ENCODE measurements at regions of chr19 and their contacts with region 1.

Region 1: GRCh38 chr19:42596391-42597072 is 1.8 kb upstream of the CEACAM8 start:
- DNase-seq: no peak
- ATAC-seq: peak; percentile 91
- H3K4me3 ChIP-seq: no peak overlapping the region
- H3K27ac ChIP-seq: no peak overlapping the region
- H3K4me1 ChIP-seq: no peaks in the 10 kb centered on the region
- H3K27me3 ChIP-seq: peaks cover 8% of the 10 kb centered on the region; the same call in 1 of the 2 replicates
- CTCF ChIP-seq: peak; percentile 59 to 96 (median 92)
- POLR2A ChIP-seq: no peak
- RAD21 ChIP-seq: peak; percentile 62

Region 2: DNA sequence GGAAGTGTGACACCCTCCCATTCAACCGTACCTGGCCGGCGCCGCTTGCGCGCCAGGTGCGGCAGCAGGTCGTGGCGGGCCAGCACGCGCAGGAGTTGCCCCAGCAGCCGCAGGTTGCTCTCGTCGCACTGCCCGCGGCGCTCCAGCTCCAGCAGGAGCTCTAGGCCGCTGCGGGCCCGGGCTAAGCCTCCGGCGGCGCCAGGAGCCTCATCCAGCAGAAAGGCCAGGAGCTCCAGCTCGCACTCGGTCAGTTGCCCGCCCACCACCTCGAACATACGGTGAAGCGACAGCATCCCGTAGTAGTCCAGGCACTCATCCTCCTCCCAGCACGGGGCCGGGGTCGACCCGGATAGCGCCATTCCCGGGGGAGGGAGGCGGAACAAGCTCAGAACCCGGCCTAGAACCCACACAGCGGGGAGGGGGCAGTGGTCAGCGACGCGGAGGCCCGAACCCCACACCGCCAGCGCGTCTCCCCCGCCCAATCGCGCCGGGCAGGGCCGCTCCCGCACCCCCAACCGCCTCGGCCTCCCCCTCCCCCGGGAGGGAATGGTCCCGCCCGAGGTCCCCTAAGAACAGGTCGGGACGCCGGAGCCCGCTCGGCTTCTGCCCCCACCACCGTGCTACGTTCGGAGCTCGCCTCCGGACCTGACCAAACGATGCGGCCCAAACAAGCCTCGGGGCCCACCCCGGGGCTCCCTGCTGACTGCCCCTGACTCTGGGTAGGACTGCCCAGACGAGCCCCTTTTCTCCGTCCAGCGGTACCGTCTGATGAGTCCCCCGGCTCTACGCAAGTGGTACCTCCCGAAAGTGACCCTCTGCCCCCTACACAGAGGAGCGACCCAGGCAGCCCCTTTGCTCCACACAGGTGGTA is 379.6 kb before region 1 on chr19:
- CTCF ChIA-PET with region 1: no interaction called
- POLR2A ChIA-PET with region 1: no interaction called
- RAD21 ChIA-PET with region 1: no interaction called
- intact Hi-C with region 1: no loop called
- DNase-seq: no peak
- ATAC-seq: peak; percentile 51
- H3K4me3 ChIP-seq: peak overlapping the region; percentile 89 to 99
- H3K27ac ChIP-seq: peak overlapping the region; percentile 91
- H3K4me1 ChIP-seq: peaks cover 17 to 38% of the 10 kb centered on the region in 2 experiments
- H3K27me3 ChIP-seq: no peaks in the 10 kb centered on the region
- CTCF ChIP-seq: no peak
- POLR2A ChIP-seq: no peak
- RAD21 ChIP-seq: no peak

Region 3: DNA sequence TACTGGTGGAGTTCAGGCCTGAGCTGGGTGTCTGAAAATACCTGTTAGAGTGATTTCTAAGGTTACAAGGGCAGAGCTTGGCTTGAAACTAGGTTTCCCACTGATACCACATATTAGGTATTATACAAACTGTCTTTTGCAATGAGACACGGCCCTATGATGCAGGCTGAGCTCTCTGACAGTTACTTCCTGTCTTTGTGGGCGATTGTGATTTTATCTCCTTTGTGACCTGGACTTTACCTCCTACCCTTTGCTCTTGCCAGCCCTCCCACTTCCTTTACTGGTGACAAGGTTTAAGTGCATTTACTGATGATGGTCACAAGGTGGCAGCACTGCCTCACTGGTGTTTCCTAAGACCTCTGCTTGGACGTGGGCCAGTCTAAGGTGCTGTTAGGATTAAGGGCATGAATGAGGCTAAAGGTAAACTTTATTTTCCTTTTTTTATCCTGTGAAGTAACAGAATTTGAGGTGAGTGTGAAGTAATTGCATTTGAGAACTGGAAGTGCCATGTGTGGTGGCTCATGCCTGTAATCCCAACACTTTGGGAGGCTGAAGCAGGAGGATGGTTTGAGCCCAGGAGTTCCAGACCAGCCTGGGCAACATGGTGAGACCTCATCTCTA is 146.1 kb before region 1 on chr19:
- CTCF ChIA-PET with region 1: interaction called, 16 read pairs
- POLR2A ChIA-PET with region 1: no interaction called
- RAD21 ChIA-PET with region 1: no interaction called
- intact Hi-C with region 1: loop called (anchors 1 kb)
- DNase-seq: peak; percentile 85
- ATAC-seq: peak; percentile 92
- H3K4me3 ChIP-seq: no peak overlapping the region
- H3K27ac ChIP-seq: no peak overlapping the region
- H3K4me1 ChIP-seq: peaks cover 6 to 16% of the 10 kb centered on the region in 2 experiments; a peak in 3 of 4 replicates
- H3K27me3 ChIP-seq: no peaks in the 10 kb centered on the region
- CTCF ChIP-seq: peak; percentile 82 to 95 (median 93)
- POLR2A ChIP-seq: no peak
- RAD21 ChIP-seq: peak; percentile 98

Region 4: GRCh38 chr19:42563352-42564210 is 33.0 kb before region 1 on chr19:
- CTCF ChIA-PET with region 1: interaction called, 9 read pairs
- POLR2A ChIA-PET with region 1: no interaction called
- RAD21 ChIA-PET with region 1: no interaction called
- intact Hi-C with region 1: loop called (anchors 5 kb)
- DNase-seq: peak; percentile 43
- ATAC-seq: peak; percentile 95
- H3K4me3 ChIP-seq: no peak overlapping the region
- H3K27ac ChIP-seq: no peak overlapping the region
- H3K4me1 ChIP-seq: peaks cover 0 to 3% of the 10 kb centered on the region in 2 experiments; a peak in 2 of 4 replicates
- H3K27me3 ChIP-seq: 0 out of 2 replicates have a peak, but pooled peaks cover 2% of the 10 kb centered on the region
- CTCF ChIP-seq: peak; percentile 36 to 76 (median 65); a peak in 5 of 6 replicates
- POLR2A ChIP-seq: no peak
- RAD21 ChIP-seq: peak; percentile 54